ENCODE measurements at regions of chr1 and their contacts with region 1.

Region 1: GRCh38 chr1:94258873-94259331 is 21.5 kb upstream of the ARHGAP29 start:
- DNase-seq: peak; percentile 94
- H3K4me3 ChIP-seq: no peak overlapping the region
- H3K27ac ChIP-seq: peak overlapping the region; percentile 82
- H3K4me1 ChIP-seq: peaks cover 48% of the 10 kb centered on the region
- H3K27me3 ChIP-seq: no peaks in the 10 kb centered on the region
- CTCF ChIP-seq: no peak

Region 2: GRCh38 chr1:93734999-93735398 is 523.9 kb before region 1 on chr1:
- CTCF ChIA-PET with region 1: no interaction called
- dilution Hi-C with region 1: no loop called
- in situ Hi-C with region 1: no loop called
- intact Hi-C with region 1: no loop called
- DNase-seq: no peak
- H3K4me3 ChIP-seq: no peak overlapping the region
- H3K27ac ChIP-seq: peak overlapping the region; percentile 47
- H3K4me1 ChIP-seq: peaks cover 66% of the 10 kb centered on the region
- H3K27me3 ChIP-seq: no peaks in the 10 kb centered on the region
- CTCF ChIP-seq: peak in 1 of 2 donors; percentile 23

Region 3: DNA sequence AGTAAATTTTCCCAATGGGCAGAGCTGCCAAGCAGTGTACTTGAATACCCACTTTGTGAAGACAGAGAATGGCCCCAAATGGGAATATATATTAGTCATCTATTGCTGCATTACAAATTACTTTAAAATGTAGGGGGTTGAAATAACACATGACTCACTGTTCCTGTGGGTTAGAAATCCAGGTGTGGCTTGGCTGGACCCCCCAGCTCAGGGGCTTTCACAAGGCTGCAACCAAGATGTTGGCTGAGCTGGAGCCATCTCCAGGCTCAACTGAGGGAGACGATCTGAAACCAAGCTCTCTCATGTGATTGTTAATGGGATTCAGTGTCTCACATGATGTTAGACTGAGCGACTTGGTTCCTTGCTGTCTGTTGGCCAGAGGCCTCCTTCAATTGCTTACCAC is 11.9 kb after region 1 on chr1:
- CTCF ChIA-PET with region 1: interaction called, 6 read pairs
- dilution Hi-C with region 1: no loop called
- in situ Hi-C with region 1: no loop called
- intact Hi-C with region 1: loop called (anchors 1 kb)
- DNase-seq: peak; percentile 90
- H3K4me3 ChIP-seq: no peak overlapping the region
- H3K27ac ChIP-seq: peak overlapping the region; percentile 78
- H3K4me1 ChIP-seq: peaks cover 43% of the 10 kb centered on the region
- H3K27me3 ChIP-seq: no peaks in the 10 kb centered on the region
- CTCF ChIP-seq: no peak

Region 4: GRCh38 chr1:94299627-94300552 is 41.0 kb after region 1 on chr1:
- CTCF ChIA-PET with region 1: interaction called, 4 read pairs
- dilution Hi-C with region 1: loop called (anchors 5 kb)
- in situ Hi-C with region 1: no loop called
- intact Hi-C with region 1: loop called (anchors 2 kb)
- DNase-seq: peak; percentile 96
- H3K4me3 ChIP-seq: no peak overlapping the region
- H3K27ac ChIP-seq: peak overlapping the region; percentile 70
- H3K4me1 ChIP-seq: peaks cover 44% of the 10 kb centered on the region
- H3K27me3 ChIP-seq: no peaks in the 10 kb centered on the region
- CTCF ChIP-seq: no peak

Region 5: GRCh38 chr1:94329986-94330385 is 71.1 kb after region 1 on chr1:
- CTCF ChIA-PET with region 1: no interaction called
- dilution Hi-C with region 1: no loop called
- in situ Hi-C with region 1: no loop called
- intact Hi-C with region 1: no loop called
- DNase-seq: no peak
- H3K4me3 ChIP-seq: no peak overlapping the region
- H3K27ac ChIP-seq: no peak overlapping the region
- H3K4me1 ChIP-seq: peaks cover 45% of the 10 kb centered on the region
- H3K27me3 ChIP-seq: no peaks in the 10 kb centered on the region
- CTCF ChIP-seq: peak; percentile 28 to 44